Activated naive CD4-positive, alpha-beta T cell treated with anti-CD3 and anti-CD28 coated beads for 36 hours (primary cell): ENCODE measurements at regions of chr2 and their contacts with region 1.

Region 1: GRCh38 chr2:71331581-71332434 is at the start of gene ZNF638:
- DNase-seq: peak; percentile 93
- H3K4me3 Mint-ChIP-seq: peak within 1 kb of the TSS; percentile 99
- H3K27ac Mint-ChIP-seq: peak within 1 kb of the TSS; percentile 98
- H3K4me1 Mint-ChIP-seq: peaks cover 37% of the 10 kb centered on the region
- H3K27me3 Mint-ChIP-seq: no peaks in the 10 kb centered on the region
- total RNA-seq, gene ZNF638: 79.8 to 84.0 TPM

Region 2: DNA sequence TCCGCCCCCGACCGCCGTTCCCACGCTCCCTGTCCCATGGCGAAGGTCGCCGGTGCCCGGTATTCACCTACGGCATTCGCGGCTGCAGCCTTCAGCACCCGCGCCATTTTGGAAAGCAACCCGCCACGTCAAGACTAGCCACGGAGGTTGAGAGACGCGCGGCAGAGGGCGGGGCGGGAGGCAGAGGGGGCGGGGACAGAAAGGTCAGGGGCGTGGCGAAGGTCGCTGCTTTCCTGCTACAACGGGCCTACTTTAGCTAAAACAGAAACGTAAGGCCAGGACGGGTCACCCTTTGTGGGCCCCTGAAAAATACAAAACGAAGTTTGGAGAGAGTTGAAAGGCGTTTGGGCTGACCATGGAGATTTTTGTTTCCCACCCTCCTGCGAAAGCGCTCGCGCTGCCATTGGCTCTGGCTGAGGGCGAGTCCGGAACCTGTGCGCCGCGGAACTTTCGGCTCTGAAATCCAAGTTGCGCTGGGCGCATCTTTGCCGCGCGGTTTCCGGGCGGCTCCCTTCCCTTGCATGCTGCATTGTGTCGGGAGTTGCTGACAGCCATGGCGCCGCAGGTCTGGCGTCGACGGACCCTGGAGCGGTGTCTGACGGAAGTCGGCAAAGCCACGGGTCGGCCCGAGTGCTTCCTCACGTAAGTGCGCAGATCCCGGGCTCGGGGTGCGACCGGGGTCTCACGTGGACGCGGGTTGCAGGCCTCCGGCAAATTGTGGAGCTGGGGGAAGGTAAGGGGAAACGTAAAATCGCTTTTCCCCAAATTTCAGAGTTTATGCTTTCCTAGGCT is 201.5 kb before region 1 on chr2 and contains the starts of genes MCEE and MPHOSPH10:
- CTCF ChIA-PET with region 1: no interaction called
- intact Hi-C with region 1: loop called (anchors 1 kb)
- DNase-seq: peak; percentile 94
- H3K4me3 Mint-ChIP-seq: no peak within 1 kb of the TSS
- H3K27ac Mint-ChIP-seq: no peak within 1 kb of the TSS
- H3K4me1 Mint-ChIP-seq: peaks cover 16% of the 10 kb centered on the region
- H3K27me3 Mint-ChIP-seq: no peaks in the 10 kb centered on the region
- total RNA-seq, gene MCEE: 14.0 to 15.8 TPM
- total RNA-seq, gene MPHOSPH10: 27.0 to 32.3 TPM

Region 3: GRCh38 chr2:71276311-71277146 is 55.3 kb before region 1 on chr2:
- CTCF ChIA-PET with region 1: interaction called, 5 read pairs
- intact Hi-C with region 1: loop called (anchors 1 kb)
- DNase-seq: peak; percentile 87
- H3K4me3 Mint-ChIP-seq: peak overlapping the region; percentile 69
- H3K27ac Mint-ChIP-seq: no peak overlapping the region
- H3K4me1 Mint-ChIP-seq: peaks cover 8% of the 10 kb centered on the region
- H3K27me3 Mint-ChIP-seq: peaks cover 68% of the 10 kb centered on the region

Region 4: GRCh38 chr2:71299507-71299906 is 32.3 kb before region 1 on chr2:
- CTCF ChIA-PET with region 1: interaction called, 37 read pairs
- intact Hi-C with region 1: loop called (anchors 1 kb)
- DNase-seq: no peak
- H3K4me3 Mint-ChIP-seq: no peak overlapping the region
- H3K27ac Mint-ChIP-seq: no peak overlapping the region
- H3K4me1 Mint-ChIP-seq: no peaks in the 10 kb centered on the region
- H3K27me3 Mint-ChIP-seq: peaks cover 5% of the 10 kb centered on the region

Region 5: GRCh38 chr2:71348302-71348701 is 16.5 kb after region 1 on chr2:
- CTCF ChIA-PET with region 1: interaction called, 18 read pairs
- intact Hi-C with region 1: loop called (anchors 2 kb)
- DNase-seq: peak; percentile 12
- H3K4me3 Mint-ChIP-seq: no peak overlapping the region
- H3K27ac Mint-ChIP-seq: no peak overlapping the region
- H3K4me1 Mint-ChIP-seq: peaks cover 60% of the 10 kb centered on the region
- H3K27me3 Mint-ChIP-seq: no peaks in the 10 kb centered on the region

Region 6: GRCh38 chr2:71358931-71359671 is 27.3 kb after region 1 on chr2:
- CTCF ChIA-PET with region 1: interaction called, 10 read pairs
- intact Hi-C with region 1: loop called (anchors 1 kb)
- DNase-seq: peak; percentile 9
- H3K4me3 Mint-ChIP-seq: no peak overlapping the region
- H3K27ac Mint-ChIP-seq: peak overlapping the region; percentile 28
- H3K4me1 Mint-ChIP-seq: peaks cover 47% of the 10 kb centered on the region
- H3K27me3 Mint-ChIP-seq: no peaks in the 10 kb centered on the region

Region 7: DNA sequence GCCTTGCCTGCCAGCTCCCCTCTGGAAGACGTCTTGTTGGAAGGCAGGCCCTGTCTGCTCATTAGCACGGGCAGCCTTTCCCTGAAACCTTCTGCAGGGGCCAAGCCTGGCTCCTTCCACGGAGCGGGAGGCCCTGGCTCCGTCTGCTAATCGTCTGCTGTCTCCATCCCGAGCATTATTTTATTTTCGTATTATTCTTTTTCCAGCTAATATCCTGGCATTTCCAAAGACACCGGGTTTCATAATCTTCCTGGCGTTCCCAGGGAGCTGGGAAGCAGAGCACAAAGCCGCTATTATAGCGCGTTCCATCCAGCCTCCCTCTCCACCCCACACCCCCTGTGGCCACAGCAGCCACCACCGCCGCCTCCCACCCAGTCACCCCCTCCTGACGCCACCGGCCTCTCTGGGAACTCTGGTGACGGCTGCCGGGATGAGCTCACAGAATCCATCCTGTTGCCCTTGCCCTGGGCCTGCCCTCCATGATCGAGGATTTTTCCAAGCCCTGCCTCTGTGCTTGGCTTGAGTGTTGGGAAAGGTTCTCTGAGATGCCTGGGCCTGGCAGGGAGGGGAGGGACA is 247.0 kb after region 1 on chr2:
- CTCF ChIA-PET with region 1: no interaction called
- intact Hi-C with region 1: no loop called
- DNase-seq: no peak
- H3K4me3 Mint-ChIP-seq: no peak overlapping the region
- H3K27ac Mint-ChIP-seq: no peak overlapping the region
- H3K4me1 Mint-ChIP-seq: no peaks in the 10 kb centered on the region
- H3K27me3 Mint-ChIP-seq: no peaks in the 10 kb centered on the region